ENCODE measurements at regions of chr10 and their contacts with region 1.

Region 1: DNA sequence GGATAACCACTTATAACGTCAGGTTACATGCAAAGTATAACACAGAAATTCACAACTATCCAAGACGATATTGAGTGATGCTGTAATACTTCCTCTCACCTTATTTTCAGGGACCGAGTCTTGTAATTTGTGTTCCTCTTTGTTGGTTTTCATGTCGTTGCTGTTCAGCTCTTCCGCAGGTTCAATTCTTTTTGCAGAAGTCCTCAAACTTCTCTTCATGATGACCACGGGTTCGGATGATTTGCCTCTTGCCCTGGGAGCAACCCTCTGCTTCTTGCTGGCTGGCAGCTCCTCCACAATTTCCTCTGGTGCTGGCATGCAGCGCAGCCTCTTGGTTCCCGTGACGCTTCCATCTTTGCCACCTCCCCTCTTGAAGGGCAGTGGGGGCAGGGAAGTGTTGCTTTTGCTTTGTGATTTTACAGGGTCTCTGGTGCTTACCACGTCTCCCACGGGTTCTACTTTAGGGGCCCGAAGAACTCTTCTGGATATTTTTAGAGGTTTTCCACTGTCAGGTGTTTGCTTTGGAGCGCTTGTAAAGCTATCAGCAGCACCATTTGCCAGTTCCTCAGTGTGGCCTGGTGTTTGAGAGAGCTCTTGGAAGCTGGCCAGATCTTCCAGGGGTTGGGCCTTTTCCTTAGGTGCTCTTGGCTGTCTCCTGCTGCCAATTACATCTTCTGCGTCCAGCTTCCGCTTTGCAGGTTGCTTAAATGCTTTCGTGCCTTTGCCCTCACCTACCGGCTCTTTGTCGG is 23.6 kb downstream of the MKI67 start:
- DNase-seq: no peak
- ATAC-seq: no peak
- H3K4me3 Mint-ChIP-seq: peak overlapping the region; percentile 17
- H3K27ac Mint-ChIP-seq: peak overlapping the region; percentile 75
- H3K4me1 Mint-ChIP-seq: peaks cover 27% of the 10 kb centered on the region
- H3K27me3 Mint-ChIP-seq: no peaks in the 10 kb centered on the region

Region 2: GRCh38 chr10:128116851-128117615 is 14.4 kb after region 1 on chr10:
- CTCF ChIA-PET with region 1: interaction called, 12 read pairs
- POLR2A ChIA-PET with region 1: interaction called, 6 read pairs
- DNase-seq: no peak
- ATAC-seq: no peak
- H3K4me3 Mint-ChIP-seq: no peak overlapping the region
- H3K27ac Mint-ChIP-seq: peak overlapping the region; percentile 7
- H3K4me1 Mint-ChIP-seq: peaks cover 41% of the 10 kb centered on the region
- H3K27me3 Mint-ChIP-seq: no peaks in the 10 kb centered on the region

Region 3: DNA sequence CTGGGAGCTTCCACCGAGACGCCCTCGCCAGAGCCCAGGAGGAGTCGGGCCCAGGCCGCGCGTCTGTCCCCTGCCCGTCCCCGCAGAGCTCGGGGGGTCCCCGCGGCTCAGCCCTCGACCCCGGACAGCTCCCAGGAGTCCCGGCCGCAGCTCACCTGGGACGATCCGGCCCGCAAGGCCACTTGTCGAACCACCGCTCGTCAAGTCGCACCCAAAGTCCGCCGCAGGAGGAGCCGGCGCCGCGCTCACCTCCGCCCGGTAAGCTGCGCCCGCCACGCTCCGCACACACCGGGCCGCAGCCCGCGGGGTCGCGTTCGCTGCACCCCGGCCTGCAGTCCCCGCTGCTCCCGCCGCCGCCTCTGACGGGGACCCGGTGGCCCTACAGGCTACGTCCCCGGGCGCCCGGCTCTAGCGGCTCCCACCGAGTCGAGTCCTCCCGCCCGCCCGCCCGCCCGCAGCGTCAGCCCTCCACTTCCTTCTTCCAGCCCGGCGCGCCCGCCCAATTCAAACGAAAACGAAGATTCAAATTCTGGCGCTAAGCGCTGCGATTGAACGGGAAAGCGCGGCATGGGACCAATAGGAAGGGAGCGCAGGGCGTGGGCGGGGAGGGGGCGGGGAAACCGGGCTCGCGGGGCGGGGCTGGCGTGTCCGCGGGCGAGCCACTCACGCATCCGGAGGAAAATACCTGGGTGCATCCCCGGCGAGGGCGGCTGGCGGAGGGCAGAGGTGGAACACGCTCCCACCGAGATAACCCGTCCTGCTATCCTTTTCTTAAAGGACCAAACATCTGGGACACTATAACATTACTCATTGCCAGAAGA is 23.5 kb after region 1 on chr10 and contains the start of gene MKI67:
- CTCF ChIA-PET with region 1: interaction called, 4 read pairs
- POLR2A ChIA-PET with region 1: interaction called, 10 read pairs
- DNase-seq: peak; percentile 96
- ATAC-seq: peak; percentile 90
- H3K4me3 Mint-ChIP-seq: peak within 1 kb of the TSS; percentile 95
- H3K27ac Mint-ChIP-seq: peak within 1 kb of the TSS; percentile 93
- H3K4me1 Mint-ChIP-seq: peaks cover 40% of the 10 kb centered on the region
- H3K27me3 Mint-ChIP-seq: peaks cover 2% of the 10 kb centered on the region
- total RNA-seq, gene MKI67: 356 to 368 TPM